HEK293 (cell line): ENCODE measurements at regions of chr19 and their contacts with region 1.

Region 1: DNA sequence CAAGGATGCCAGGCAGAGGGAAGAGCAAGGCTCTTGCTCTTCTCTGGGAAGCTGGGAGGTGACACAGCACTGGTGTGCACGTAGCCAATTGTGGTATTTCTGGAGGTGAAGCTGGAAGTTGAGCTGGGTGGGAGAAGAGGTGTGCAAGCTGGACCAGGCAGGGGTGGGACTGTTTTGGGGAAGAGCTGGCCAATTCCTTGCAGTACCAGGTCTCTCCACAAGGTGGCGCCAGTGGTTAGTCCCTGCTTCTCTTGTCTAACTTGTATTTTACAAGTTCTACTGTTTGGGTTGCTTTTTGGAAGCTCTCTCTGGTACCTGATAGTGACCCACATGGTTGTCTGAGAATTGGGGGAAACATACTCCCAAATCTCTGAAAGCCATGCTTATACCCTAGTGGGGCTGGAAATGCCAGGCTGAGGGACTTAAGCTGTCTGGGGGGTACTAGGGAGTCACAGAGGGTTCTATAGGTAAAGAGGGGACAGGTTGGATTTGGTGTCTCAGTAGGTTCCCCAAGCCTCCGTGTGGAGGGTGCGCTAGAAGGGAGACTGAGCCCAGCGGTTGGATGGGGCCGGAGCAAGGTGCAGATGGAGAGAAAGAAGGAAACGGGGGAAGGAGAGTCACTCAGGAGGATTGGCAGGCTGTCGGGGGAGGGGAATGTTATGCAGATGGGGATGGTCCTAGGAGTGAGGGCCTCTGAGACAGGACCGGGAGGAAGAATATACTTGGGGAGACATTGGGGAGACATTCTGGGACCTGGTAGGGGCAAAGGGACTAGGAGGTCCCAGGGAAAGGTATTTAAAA is 3.0 kb downstream of the HPN start:
- H3K4me3 ChIP-seq: no peak overlapping the region
- H3K27ac ChIP-seq: no peak overlapping the region
- H3K4me1 ChIP-seq: peaks cover 5% of the 10 kb centered on the region; the same call in 1 of the 2 replicates
- CTCF ChIP-seq: peak; percentile 100

Region 2: GRCh38 chr19:34985249-34986022 is 59.1 kb before region 1 on chr19:
- CTCF ChIA-PET with region 1: interaction called, 18 read pairs
- POLR2A ChIA-PET with region 1: interaction called, 6 read pairs
- H3K4me3 ChIP-seq: no peak overlapping the region
- H3K27ac ChIP-seq: no peak overlapping the region
- H3K4me1 ChIP-seq: no peaks in the 10 kb centered on the region
- CTCF ChIP-seq: no peak

Region 3: DNA sequence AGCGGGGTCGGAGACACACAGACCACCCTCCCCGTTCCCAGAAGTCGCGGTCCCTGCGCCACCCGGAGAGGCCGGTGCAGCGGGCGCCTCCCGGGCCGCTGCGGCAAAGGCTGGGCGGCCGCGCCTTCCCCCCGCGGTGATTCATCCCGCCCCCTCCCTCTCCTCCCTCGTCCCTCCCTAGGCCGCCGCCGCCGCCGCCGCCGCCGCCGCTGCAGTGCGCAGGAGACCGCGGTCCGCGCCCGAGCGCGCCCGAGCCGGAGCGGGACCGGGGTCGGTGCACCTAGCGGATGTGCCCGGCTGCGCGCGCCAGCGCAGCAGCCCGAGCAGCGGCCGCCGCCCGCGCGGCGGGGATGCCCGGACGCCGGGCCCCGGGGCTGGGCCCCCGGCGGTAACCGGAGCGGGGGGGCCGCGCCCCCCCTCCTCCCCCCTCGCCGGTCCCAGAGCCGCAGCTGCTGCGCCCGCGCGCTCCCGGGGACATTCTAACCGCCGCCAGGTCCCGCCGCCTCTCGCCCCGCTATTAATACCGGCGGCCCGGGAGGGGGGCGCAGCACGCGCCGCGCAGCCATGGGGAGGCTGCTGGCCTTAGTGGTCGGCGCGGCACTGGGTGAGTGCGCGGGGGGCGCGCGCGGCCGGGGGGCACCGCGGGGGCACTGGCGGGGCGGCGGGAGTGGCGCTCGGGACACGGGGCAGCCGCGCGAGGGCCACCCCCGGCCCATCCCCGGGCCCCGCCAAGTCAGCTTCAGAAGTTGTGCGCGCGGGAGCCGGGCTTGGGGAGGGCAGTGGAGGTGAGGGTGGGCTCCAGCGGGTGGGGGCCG is 14.1 kb before region 1 on chr19 and contains the start of gene SCN1B:
- CTCF ChIA-PET with region 1: interaction called, 57 read pairs
- POLR2A ChIA-PET with region 1: interaction called, 13 read pairs
- H3K4me3 ChIP-seq: peak within 1 kb of the TSS; percentile 42
- H3K27ac ChIP-seq: peak within 1 kb of the TSS; percentile 74; the same call in 1 of the 2 replicates
- H3K4me1 ChIP-seq: peaks cover 14% of the 10 kb centered on the region
- CTCF ChIP-seq: no peak

Region 4: GRCh38 chr19:35080613-35081170 is 36.2 kb after region 1 on chr19:
- CTCF ChIA-PET with region 1: interaction called, 33 read pairs
- POLR2A ChIA-PET with region 1: no interaction called
- H3K4me3 ChIP-seq: no peak overlapping the region
- H3K27ac ChIP-seq: no peak overlapping the region
- H3K4me1 ChIP-seq: no peaks in the 10 kb centered on the region
- CTCF ChIP-seq: peak; percentile 23; the same call in 1 of the 2 replicates

Region 5: DNA sequence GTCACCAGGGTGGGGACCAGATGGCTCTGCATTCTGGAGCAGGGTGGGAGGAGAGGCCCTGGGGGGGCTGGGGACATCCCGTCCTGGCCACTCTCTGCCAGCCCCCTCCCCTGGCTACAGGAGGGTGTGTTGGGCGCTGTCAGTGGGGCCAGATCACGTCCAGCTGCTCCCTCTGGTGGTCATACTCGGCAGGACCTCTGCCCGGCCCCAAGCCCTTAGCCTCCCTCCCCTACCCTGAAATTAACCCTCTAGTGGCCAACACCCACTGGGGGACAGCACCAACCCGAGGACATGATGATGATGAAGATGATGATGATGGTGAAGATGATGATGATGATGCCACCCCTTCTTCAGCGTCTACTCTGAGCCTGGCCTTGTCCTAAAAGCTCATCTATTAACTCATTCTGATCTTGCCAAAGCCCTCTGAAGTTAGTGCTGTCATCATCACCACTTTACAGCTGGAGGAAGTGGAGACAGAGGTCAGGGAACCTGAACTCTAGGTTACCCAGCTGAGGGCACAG is 90.9 kb after region 1 on chr19:
- CTCF ChIA-PET with region 1: interaction called, 74 read pairs
- POLR2A ChIA-PET with region 1: no interaction called
- H3K4me3 ChIP-seq: no peak overlapping the region
- H3K27ac ChIP-seq: no peak overlapping the region; the same call in 1 of the 2 replicates
- H3K4me1 ChIP-seq: peaks cover 3% of the 10 kb centered on the region
- CTCF ChIP-seq: peak; percentile 98